Posterior vena cava (tissue), 2 donors: ENCODE measurements at regions of chr6 and their contacts with region 1.

Region 1: GRCh38 chr6:19424853-19425252 is 412.3 kb upstream of the ID4 start:
- DNase-seq: no peak

Region 2: GRCh38 chr6:19342616-19343015 is 82.2 kb before region 1 on chr6:
- intact Hi-C with region 1: loop called in 1 of 2 experiments (anchors 2 kb)
- DNase-seq: no peak

Region 3: GRCh38 chr6:19380293-19380692 is 44.6 kb before region 1 on chr6:
- intact Hi-C with region 1: no loop called
- DNase-seq: no peak

Region 4: GRCh38 chr6:19472847-19473246 is 48.0 kb after region 1 on chr6:
- intact Hi-C with region 1: no loop called
- DNase-seq: no peak